ENCODE measurements at regions of chr1 and their contacts with region 1.

Region 1: DNA sequence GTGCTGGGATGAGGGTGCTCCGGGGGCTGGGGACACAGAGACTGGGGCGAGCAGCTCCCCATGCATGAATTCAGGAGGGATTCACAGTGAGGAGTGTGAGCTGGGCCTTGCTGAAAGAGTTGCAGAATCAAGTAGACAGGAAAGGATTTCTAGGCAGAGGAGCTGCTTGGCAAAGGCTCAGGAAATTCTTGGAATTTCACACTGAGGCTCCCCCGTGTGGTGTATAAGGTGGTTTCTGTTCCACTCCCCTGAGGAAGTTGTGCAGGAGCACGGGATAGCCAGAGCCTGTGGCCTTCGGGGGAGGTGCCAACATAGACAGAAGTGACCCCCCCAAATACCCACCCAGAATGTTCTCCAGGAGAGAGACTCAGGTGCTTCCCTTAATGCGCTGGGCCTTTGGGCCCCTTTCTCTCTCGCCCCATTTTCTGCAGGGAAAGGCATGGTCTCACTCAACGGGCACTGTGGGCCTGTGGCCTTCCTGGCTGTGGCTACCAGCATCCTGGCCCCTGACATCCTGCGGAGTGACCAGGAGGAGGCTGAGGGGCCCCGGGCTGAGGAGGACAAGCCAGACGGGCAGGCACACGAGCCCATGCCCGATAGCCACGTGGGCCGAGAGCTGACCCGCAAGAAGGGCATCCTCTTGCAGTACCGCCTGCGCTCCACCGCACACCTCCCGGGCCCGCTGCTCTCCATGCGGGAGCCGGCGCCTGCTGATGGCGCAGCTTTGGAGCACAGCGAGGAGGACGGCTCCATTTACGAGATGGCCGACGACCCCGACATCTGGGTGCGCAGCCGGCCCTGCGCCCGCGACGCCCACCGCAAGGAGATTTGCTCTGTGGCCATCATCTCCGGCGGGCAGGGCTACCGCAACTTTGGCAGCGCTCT is 58.5 kb upstream of the ACTL8 start:
- DNase-seq: no peak
- ATAC-seq: no peak
- H3K4me3 ChIP-seq: no peak overlapping the region
- H3K27ac ChIP-seq: no peak overlapping the region
- H3K4me1 ChIP-seq: no peaks in the 10 kb centered on the region
- H3K27me3 ChIP-seq: no peaks in the 10 kb centered on the region

Region 2: GRCh38 chr1:17732475-17732874 is 35.8 kb after region 1 on chr1:
- intact Hi-C with region 1: no loop called
- DNase-seq: no peak
- ATAC-seq: no peak
- H3K4me3 ChIP-seq: no peak overlapping the region
- H3K27ac ChIP-seq: no peak overlapping the region
- H3K4me1 ChIP-seq: no peaks in the 10 kb centered on the region
- H3K27me3 ChIP-seq: no peaks in the 10 kb centered on the region

Region 3: GRCh38 chr1:17759114-17759513 is 62.5 kb after region 1 on chr1:
- intact Hi-C with region 1: loop called in 1 of 2 experiments (anchors 10 kb)
- DNase-seq: peak in 1 of 2 donors; percentile 32
- ATAC-seq: no peak
- H3K4me3 ChIP-seq: no peak overlapping the region
- H3K27ac ChIP-seq: no peak overlapping the region
- H3K4me1 ChIP-seq: no peaks in the 10 kb centered on the region
- H3K27me3 ChIP-seq: no peaks in the 10 kb centered on the region

Measured in aorta (tissue), 5 donors.